Left colon (tissue), 2 donors: ENCODE measurements at regions of chr3 and their contacts with region 1.

Region 1: GRCh38 chr3:113287803-113288648 is 76.7 kb downstream of the BOC start:
- DNase-seq: peak in 1 of 2 donors; percentile 59
- ATAC-seq: peak; percentile 50

Region 2: DNA sequence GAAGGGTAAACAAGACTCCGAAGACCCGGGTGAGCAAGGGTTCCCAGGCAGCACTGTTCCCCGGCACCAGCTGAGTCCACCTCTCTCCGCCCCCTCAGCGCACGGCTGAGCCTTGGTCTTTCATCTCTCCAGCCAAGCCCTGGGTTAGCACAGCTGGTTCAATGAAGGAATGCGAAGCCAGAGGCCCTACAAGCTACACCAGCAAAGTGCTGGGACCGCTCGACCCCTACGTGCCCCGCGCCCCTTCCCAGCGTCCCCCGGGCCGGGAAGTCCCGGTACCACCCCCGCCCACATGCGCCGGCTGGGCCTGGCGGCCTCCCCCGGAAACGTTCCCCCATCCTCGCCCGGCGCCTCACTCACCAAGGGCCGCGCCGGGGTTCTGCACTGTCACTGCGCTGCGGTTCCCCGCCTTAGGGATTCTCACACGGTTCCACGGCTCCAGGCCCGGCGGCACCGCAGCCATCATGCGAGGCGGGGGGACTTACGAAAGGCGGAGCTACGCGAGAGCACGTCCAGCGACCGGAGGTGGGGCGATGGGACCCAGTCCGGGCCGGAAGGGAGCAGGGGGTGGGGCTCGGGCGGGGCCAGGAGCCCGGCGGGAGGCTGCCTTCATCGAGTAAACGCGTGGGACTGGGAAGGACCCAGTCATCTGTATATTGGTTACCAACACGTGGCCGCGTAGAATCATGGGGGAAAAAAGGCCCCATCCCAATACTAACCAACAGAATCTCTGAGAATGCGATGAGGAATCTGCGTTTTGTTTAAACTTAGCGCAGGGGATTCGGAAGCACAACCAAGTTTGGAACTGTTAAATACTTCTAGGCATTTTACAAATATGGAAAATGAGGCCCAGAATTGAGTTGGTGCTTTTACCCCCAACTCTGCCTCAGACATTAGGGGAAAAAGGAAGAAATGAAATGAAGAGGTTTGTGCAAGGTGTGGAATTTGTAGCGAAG is 268.6 kb before region 1 on chr3:
- intact Hi-C with region 1: no loop called
- DNase-seq: peak; percentile 90 to 92
- ATAC-seq: peak; percentile 98

Region 3: GRCh38 chr3:113051302-113051711 is 236.7 kb before region 1 on chr3:
- intact Hi-C with region 1: loop called (anchors 2 to 10 kb)
- DNase-seq: peak; percentile 72 to 84
- ATAC-seq: peak; percentile 92

Region 4: GRCh38 chr3:113136071-113136470 is 152.0 kb before region 1 on chr3:
- intact Hi-C with region 1: loop called in 1 of 2 experiments (anchors 5 kb)
- DNase-seq: no peak
- ATAC-seq: no peak

Region 5: DNA sequence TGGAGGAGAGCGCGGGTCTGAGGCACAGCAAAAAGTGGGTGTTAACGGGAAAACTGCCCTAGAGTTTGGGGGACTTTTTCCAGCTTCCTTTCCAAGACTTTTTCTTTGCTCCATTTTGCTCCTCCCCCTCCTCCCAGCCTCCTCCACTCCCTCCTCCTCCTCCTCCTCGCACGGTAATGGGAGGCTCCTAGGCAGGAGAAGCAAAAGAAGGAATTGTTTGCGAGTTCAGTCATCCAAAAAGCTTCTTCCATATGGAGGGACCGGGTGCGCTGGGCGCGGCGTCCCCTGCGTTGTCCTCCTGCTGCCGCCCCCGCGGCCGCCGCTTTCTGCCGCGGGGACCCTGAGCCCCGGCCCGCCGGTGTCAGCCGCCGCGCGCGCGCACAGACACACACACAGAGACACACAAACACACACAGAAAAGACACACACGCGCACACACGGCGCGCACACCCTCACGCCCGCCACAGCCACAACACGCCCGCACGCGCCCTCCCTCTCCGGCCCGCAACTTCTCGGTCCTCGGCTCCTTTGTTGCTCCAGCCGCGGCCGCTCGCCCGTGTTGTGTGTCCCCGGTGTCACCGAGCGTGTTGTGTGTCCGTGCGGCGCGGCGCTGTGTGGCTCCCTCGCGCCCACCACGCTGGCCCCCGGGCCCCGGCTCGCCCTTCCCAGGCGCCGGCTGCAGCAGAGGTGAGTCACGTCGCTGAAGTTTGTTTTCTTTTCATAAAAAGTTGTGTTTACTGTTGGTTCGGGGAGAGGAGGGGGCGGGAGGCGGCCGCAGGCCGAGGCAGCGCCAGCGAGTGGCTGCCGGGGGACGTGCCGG is 76.5 kb before region 1 on chr3 and contains the start of gene BOC:
- intact Hi-C with region 1: loop called in 1 of 2 experiments (anchors 10 kb)
- DNase-seq: no peak
- ATAC-seq: peak; percentile 40
- total RNA-seq, gene BOC: 4.2 to 10.6 TPM